Activated CD4-positive, alpha-beta T cell treated with anti-CD3 and anti-CD28 coated beads, Interleukin-2, amount 10 ng/mL, durations not matched to agents 7 days and 5 days (primary cell): ENCODE measurements at regions of chr20 and their contacts with region 1.

Region 1: DNA sequence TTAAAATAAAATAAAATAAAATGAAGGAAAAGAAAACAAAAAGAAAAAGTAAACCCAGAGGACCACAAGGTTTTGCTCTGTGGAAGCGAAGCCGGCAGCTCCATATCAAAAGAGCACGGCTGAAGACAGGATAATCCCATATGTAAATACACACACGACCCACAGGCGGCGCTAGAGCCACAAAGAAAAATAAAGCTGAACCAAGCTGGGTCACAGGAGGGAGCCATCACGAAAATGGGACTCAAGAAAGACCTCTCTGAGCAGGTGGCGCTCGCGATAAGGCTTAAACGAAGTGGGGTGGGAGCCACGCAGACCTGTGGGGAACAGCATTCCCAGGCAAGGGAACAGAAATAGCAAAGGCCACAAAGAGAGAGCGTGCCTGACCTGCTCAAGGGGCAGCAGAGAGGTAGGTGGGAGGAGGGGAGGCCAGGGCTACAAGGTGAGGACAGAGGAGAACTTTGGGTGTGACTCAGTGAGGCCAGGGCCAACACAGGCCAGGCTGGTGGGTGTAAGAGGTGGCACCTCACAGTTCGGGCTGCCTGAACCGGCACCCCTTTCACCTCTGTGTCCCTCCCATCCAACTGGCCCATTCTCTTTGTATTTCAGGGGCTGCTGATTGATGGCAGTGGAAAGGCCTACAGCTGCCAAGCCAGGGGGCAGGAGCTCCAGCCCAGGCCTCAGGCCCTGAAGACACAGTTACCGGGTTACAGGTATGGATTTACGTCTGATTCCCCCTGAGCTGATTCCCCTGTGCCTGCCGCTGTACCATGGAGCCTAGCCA is 26.0 kb downstream of the PTGIS start:
- DNase-seq: peak; percentile 78
- H3K4me3 Mint-ChIP-seq: no peak overlapping the region
- H3K27ac Mint-ChIP-seq: peak overlapping the region; percentile 72
- H3K4me1 Mint-ChIP-seq: peaks cover 18% of the 10 kb centered on the region
- H3K27me3 Mint-ChIP-seq: peaks cover 3% of the 10 kb centered on the region

Region 2: GRCh38 chr20:49490702-49491110 is 51.2 kb before region 1 on chr20:
- CTCF ChIA-PET with region 1: no interaction called
- POLR2A ChIA-PET with region 1: no interaction called
- DNase-seq: no peak
- H3K4me3 Mint-ChIP-seq: no peak overlapping the region
- H3K27ac Mint-ChIP-seq: no peak overlapping the region
- H3K4me1 Mint-ChIP-seq: no peaks in the 10 kb centered on the region
- H3K27me3 Mint-ChIP-seq: peaks cover 43% of the 10 kb centered on the region

Region 3: GRCh38 chr20:49567421-49568334 is 25.8 kb after region 1 on chr20 and contains the start of gene PTGIS:
- CTCF ChIA-PET with region 1: interaction called, 11 read pairs
- POLR2A ChIA-PET with region 1: no interaction called
- DNase-seq: no peak
- H3K4me3 Mint-ChIP-seq: no peak within 1 kb of the TSS
- H3K27ac Mint-ChIP-seq: no peak within 1 kb of the TSS
- H3K4me1 Mint-ChIP-seq: peaks cover 20% of the 10 kb centered on the region
- H3K27me3 Mint-ChIP-seq: peaks cover 58% of the 10 kb centered on the region
- total RNA-seq, gene PTGIS: 0.40 to 0.62 TPM

Region 4: GRCh38 chr20:49594143-49594930 is 52.4 kb after region 1 on chr20:
- CTCF ChIA-PET with region 1: interaction called, 42 read pairs
- POLR2A ChIA-PET with region 1: no interaction called
- DNase-seq: peak; percentile 82
- H3K4me3 Mint-ChIP-seq: peak overlapping the region; percentile 74
- H3K27ac Mint-ChIP-seq: peak overlapping the region; percentile 92
- H3K4me1 Mint-ChIP-seq: peaks cover 88% of the 10 kb centered on the region
- H3K27me3 Mint-ChIP-seq: peaks cover 2% of the 10 kb centered on the region

Region 5: GRCh38 chr20:49603209-49603627 is 61.3 kb after region 1 on chr20:
- CTCF ChIA-PET with region 1: interaction called, 128 read pairs
- POLR2A ChIA-PET with region 1: no interaction called
- DNase-seq: no peak
- H3K4me3 Mint-ChIP-seq: no peak overlapping the region
- H3K27ac Mint-ChIP-seq: no peak overlapping the region
- H3K4me1 Mint-ChIP-seq: peaks cover 51% of the 10 kb centered on the region
- H3K27me3 Mint-ChIP-seq: no peaks in the 10 kb centered on the region

Region 6: DNA sequence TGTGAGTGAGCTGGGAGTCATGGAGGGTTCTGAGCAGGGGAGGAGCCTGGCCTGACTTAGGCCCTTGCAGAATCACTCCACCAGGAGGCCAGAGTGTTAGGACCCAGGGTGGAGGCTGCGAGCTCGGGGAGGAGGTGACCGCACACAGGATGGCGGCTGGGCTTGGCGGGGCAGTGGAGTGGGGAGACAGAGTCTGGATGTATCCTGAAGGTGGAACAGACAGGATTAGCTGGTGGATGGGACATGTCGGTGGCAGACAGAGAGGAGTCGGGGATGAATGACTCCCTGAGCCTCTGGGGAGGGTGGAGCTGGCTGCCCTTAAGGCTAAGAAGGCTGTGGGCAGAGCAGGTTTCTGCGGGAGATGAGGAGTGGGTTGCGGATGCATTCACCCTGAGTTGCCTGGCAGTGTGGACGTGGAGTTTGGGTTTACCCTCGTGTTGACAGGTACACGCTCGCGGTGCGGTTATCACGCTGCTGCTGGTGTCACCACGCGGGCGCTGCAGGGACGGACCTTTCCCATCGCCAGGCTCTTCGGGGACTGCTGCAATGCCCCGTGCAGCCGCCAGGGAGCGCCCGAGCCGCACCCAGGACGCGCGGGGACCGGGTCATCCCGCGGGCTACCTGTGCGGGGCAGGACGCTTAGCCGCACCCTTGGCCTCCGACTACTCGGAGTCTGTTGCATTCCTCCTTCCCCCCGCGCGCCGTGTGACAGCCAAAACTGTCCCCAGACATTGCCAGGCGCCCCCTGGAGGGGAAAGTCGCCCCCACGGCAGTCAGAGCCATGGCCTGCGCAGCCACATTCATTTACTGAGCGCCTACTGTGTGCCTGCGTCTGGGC is 69.0 kb after region 1 on chr20:
- CTCF ChIA-PET with region 1: interaction called, 128 read pairs
- POLR2A ChIA-PET with region 1: no interaction called
- DNase-seq: peak; percentile 75
- H3K4me3 Mint-ChIP-seq: peak overlapping the region; percentile 20
- H3K27ac Mint-ChIP-seq: peak overlapping the region; percentile 23
- H3K4me1 Mint-ChIP-seq: peaks cover 25% of the 10 kb centered on the region
- H3K27me3 Mint-ChIP-seq: no peaks in the 10 kb centered on the region